PC-3 (cell line): ENCODE measurements at regions of chr1 and their contacts with region 1.

Region 1: GRCh38 chr1:112955781-112956543 is at the start of gene SLC16A1:
- DNase-seq: peak; percentile 92
- ATAC-seq: peak; percentile 75
- H3K4me3 ChIP-seq: peak within 1 kb of the TSS; percentile 82
- H3K27ac ChIP-seq: peak within 1 kb of the TSS; percentile 68
- H3K4me1 ChIP-seq: peaks cover 28% of the 10 kb centered on the region
- H3K27me3 ChIP-seq: no peaks in the 10 kb centered on the region
- CTCF ChIP-seq: 0 out of 2 replicates have a peak, but pooled peaks have one; percentile 11
- total RNA-seq, gene SLC16A1: 103 and 116 TPM in 2 replicates

Region 2: DNA sequence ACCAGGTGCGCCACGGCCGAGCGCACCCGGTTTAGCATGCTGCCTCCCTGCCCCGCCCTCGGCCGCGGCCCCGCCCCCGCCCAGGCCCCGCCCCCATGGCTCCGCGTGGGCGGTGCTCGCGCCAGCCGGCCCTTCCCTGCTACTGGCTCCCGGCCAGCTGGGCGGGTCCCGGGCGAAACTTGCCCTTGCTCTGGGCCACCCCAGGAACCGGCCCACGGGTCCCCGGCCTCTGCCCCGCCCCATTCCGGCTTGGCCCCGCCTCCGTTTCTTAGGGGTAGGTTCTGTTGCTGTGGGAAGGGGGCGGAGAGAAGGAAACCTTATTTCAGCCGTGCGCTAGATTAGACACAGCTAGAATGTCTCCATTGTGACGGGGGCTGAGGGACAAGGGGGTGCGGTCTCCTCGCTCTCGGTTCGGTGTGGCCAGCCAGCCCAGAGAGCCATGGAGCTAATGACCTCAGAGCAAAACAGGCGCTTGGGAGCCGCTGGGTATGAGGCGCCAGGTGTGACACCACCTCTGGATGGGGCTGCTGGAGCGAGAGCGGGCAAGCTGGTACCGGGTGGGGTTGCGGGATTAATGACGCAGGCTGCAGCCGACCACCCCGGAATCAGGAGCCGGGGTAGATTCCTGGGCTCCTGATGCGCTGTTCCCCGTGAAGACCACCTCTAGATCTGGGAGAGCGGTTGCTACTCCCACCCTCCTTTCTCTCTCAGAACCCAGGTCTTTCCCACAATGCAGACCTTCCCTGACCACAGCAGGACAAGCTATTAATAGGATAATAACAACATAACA is 240.5 kb before region 1 on chr1 and contains the start of gene PPM1J:
- CTCF ChIA-PET with region 1: no interaction called
- POLR2A ChIA-PET with region 1: no interaction called
- intact Hi-C with region 1: loop called (anchors 5 kb)
- DNase-seq: peak; percentile 97
- ATAC-seq: peak; percentile 78
- H3K4me3 ChIP-seq: peak within 1 kb of the TSS; percentile 70
- H3K27ac ChIP-seq: no peak within 1 kb of the TSS
- H3K4me1 ChIP-seq: peaks cover 13% of the 10 kb centered on the region; the same call in 1 of the 2 replicates
- H3K27me3 ChIP-seq: no peaks in the 10 kb centered on the region
- CTCF ChIP-seq: no peak
- total RNA-seq, gene PPM1J: 0.80 and 1.4 TPM in 2 replicates

Region 3: DNA sequence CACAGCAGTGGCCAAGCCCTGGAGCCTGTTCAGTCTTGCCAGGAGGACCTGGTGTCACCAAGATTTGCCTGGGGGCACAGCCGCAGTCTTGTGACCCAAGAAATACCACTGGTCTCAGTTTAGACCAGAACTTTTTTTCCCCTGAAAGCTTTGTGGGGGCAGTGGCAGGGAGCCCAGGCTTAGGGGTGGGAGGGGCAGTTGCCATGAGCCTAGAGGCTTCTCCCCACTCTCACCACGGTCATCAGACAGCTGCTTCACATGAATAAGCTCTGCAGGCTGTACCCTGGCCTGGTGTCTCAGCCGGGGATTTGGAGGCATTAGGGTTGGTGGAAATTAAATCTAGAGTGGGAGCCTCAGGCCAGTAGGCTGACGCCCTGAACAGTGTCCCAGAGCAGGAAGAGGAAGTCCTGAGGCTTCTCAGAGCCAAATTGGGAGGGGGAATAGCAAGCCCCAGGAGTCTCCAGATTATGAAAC is 73.7 kb before region 1 on chr1:
- CTCF ChIA-PET with region 1: no interaction called
- POLR2A ChIA-PET with region 1: interaction called, 5 read pairs
- intact Hi-C with region 1: loop called (anchors 1 kb)
- DNase-seq: no peak
- ATAC-seq: no peak
- H3K4me3 ChIP-seq: no peak overlapping the region
- H3K27ac ChIP-seq: no peak overlapping the region
- H3K4me1 ChIP-seq: peaks cover 6% of the 10 kb centered on the region
- H3K27me3 ChIP-seq: no peaks in the 10 kb centered on the region
- CTCF ChIP-seq: no peak

Region 4: DNA sequence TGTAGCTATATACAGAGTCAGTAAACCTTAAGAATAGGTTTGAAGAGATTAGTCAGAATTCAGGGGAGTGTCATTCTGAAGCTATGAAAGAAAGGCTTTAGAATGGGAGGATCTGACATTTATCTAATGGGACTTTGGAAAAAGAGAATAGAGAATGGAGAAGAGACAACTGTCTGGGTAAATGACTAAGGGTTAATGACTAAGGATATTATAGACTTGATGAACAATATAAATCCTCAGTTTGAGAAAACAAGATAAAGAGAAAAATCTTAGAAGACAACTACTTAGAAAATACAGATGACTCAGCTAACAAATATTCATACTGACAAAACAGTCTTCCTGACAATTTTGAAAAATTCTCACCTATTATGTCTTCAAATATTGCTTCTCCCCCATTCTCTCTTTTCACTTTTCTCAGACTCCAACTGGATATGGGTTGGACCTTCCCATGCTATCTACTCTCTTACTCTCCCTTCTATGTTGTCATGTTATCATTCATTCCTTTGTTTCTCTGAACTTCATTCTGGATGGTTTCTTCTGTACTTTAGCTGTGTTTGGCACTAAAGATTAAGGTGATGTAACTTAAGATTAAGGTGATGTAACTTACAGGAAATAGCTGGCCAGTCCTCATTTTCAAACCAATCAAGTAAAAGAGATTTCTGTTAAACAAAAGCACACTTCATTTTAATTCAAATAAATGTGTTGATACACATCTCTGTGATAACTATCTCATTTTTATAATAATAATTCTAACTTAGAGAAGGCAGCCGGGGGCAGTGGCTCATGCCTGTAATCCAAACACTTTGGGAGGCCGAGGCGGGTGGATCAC is 20.3 kb before region 1 on chr1:
- CTCF ChIA-PET with region 1: no interaction called
- POLR2A ChIA-PET with region 1: interaction called, 9 read pairs
- intact Hi-C with region 1: loop called (anchors 2 kb)
- DNase-seq: peak; percentile 51
- ATAC-seq: peak; percentile 59
- H3K4me3 ChIP-seq: no peak overlapping the region
- H3K27ac ChIP-seq: peak overlapping the region; percentile 19
- H3K4me1 ChIP-seq: peaks cover 29% of the 10 kb centered on the region
- H3K27me3 ChIP-seq: no peaks in the 10 kb centered on the region
- CTCF ChIP-seq: no peak

Region 5: GRCh38 chr1:112971006-112971405 is 15.0 kb after region 1 on chr1:
- CTCF ChIA-PET with region 1: no interaction called
- POLR2A ChIA-PET with region 1: no interaction called
- intact Hi-C with region 1: no loop called
- DNase-seq: no peak
- ATAC-seq: no peak
- H3K4me3 ChIP-seq: no peak overlapping the region
- H3K27ac ChIP-seq: no peak overlapping the region
- H3K4me1 ChIP-seq: no peaks in the 10 kb centered on the region
- H3K27me3 ChIP-seq: no peaks in the 10 kb centered on the region
- CTCF ChIP-seq: no peak

Region 6: GRCh38 chr1:113042285-113043143 is 86.6 kb after region 1 on chr1:
- CTCF ChIA-PET with region 1: interaction called, 14 read pairs
- POLR2A ChIA-PET with region 1: interaction called, 3 read pairs
- intact Hi-C with region 1: loop called (anchors 1 kb)
- DNase-seq: peak; percentile 90
- ATAC-seq: peak; percentile 91
- H3K4me3 ChIP-seq: peak overlapping the region; percentile 12; the same call in 1 of the 2 replicates
- H3K27ac ChIP-seq: peak overlapping the region; percentile 66
- H3K4me1 ChIP-seq: peaks cover 27% of the 10 kb centered on the region
- H3K27me3 ChIP-seq: no peaks in the 10 kb centered on the region
- CTCF ChIP-seq: peak; percentile 84

Region 7: DNA sequence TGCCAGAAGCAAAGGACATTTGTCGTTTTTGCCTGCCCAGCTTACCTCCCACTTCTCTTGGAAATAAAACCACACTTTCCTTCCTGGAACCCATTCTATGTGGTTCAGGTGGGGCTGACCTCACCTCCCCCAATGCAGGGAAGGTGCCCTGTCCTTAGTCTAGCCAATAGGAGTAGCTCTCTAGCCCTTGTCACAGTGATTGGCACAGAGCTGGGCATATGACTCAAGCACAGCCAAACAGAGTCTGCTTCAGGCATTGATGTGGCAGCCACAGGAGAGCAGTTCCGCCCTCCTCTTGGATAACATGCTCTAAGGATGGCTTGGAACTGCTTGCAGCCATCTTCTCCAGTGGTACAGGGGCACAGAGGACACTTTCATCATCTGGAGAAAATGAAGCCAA is 251.1 kb after region 1 on chr1:
- CTCF ChIA-PET with region 1: no interaction called
- POLR2A ChIA-PET with region 1: no interaction called
- intact Hi-C with region 1: no loop called
- DNase-seq: peak; percentile 16
- ATAC-seq: no peak
- H3K4me3 ChIP-seq: no peak overlapping the region
- H3K27ac ChIP-seq: no peak overlapping the region
- H3K4me1 ChIP-seq: no peaks in the 10 kb centered on the region
- H3K27me3 ChIP-seq: no peaks in the 10 kb centered on the region
- CTCF ChIP-seq: no peak